H1 (cell line): ENCODE measurements at regions of chr10 and their contacts with region 1.

Region 1: DNA sequence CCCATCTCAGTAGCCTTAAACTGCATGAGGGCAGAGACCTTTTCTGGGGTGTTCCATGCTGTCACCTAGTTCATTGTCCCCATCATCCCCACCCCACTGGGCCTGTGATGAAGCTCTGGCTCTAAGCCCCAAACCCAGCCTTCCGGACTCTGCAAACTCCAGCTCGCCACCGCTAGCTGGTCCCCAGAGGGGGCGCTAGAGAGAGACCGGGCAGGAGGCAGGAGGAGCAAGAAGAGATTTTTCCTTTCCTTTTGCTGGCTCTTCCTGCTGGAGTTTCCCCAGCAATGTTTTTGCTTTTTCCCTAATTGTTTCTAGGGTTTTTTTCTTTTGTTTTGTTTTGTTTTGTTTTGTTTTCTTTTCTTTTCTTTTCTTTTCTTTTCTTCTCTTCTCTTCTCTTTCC is 234.4 kb downstream of the TEX36 start:
- DNase-seq: peak; percentile 15 to 87
- H3K4me3 ChIP-seq: no peak overlapping the region
- H3K27ac ChIP-seq: no peak overlapping the region
- H3K4me1 ChIP-seq: no peaks in the 10 kb centered on the region
- H3K27me3 ChIP-seq: no peaks in the 10 kb centered on the region; a peak in 1 of 7 replicates
- CTCF ChIP-seq: peak; percentile 81 to 87 (median 86)
- EP300 ChIP-seq: no peak
- POLR2A ChIP-seq: no peak
- RAD21 ChIP-seq: peak; percentile 63 to 74

Region 2: GRCh38 chr10:125355657-125356056 is 93.0 kb before region 1 on chr10:
- CTCF ChIA-PET with region 1: no interaction called
- POLR2A ChIA-PET with region 1: no interaction called
- DNase-seq: no peak
- H3K4me3 ChIP-seq: no peak overlapping the region
- H3K27ac ChIP-seq: no peak overlapping the region
- H3K4me1 ChIP-seq: no peaks in the 10 kb centered on the region
- H3K27me3 ChIP-seq: no peaks in the 10 kb centered on the region
- CTCF ChIP-seq: no peak
- EP300 ChIP-seq: no peak
- POLR2A ChIP-seq: no peak
- RAD21 ChIP-seq: no peak

Region 3: GRCh38 chr10:125419831-125420230 is 28.8 kb before region 1 on chr10:
- CTCF ChIA-PET with region 1: interaction called, 10 read pairs
- POLR2A ChIA-PET with region 1: no interaction called
- DNase-seq: no peak
- H3K4me3 ChIP-seq: no peak overlapping the region
- H3K27ac ChIP-seq: no peak overlapping the region
- H3K4me1 ChIP-seq: no peaks in the 10 kb centered on the region
- H3K27me3 ChIP-seq: no peaks in the 10 kb centered on the region
- CTCF ChIP-seq: no peak
- EP300 ChIP-seq: no peak
- POLR2A ChIP-seq: no peak
- RAD21 ChIP-seq: no peak

Region 4: GRCh38 chr10:125472032-125472607 is 23.5 kb after region 1 on chr10:
- CTCF ChIA-PET with region 1: interaction called, 15 read pairs
- POLR2A ChIA-PET with region 1: no interaction called
- DNase-seq: no peak
- H3K4me3 ChIP-seq: no peak overlapping the region
- H3K27ac ChIP-seq: no peak overlapping the region
- H3K4me1 ChIP-seq: no peaks in the 10 kb centered on the region
- H3K27me3 ChIP-seq: no peaks in the 10 kb centered on the region; a peak in 1 of 7 replicates
- CTCF ChIP-seq: no peak
- EP300 ChIP-seq: no peak
- POLR2A ChIP-seq: no peak
- RAD21 ChIP-seq: no peak

Region 5: DNA sequence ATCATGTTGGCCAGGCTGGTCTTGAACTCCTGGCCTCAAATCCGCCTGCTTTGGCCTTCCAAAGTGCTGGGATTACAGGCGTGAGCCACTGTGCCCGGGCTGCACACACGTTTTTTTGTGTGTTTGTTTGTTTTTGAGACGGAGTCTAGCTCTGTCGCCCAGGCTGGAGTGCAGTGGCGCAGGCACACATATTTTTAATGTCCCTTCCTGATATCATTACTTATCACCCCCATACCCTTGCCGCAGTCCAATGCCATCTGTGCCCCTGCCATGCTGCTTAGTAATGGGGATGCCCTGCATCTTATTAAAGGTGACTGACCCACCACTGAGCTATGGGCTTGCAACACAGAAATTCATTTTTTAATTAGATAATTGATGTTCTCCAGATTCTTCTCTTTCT is 53.7 kb after region 1 on chr10:
- CTCF ChIA-PET with region 1: interaction called, 10 read pairs
- POLR2A ChIA-PET with region 1: no interaction called
- DNase-seq: no peak
- H3K4me3 ChIP-seq: no peak overlapping the region
- H3K27ac ChIP-seq: no peak overlapping the region
- H3K4me1 ChIP-seq: no peaks in the 10 kb centered on the region
- H3K27me3 ChIP-seq: no peaks in the 10 kb centered on the region
- CTCF ChIP-seq: no peak
- EP300 ChIP-seq: no peak
- POLR2A ChIP-seq: no peak
- RAD21 ChIP-seq: no peak